Motor neuron (in vitro differentiated cells): ENCODE measurements at regions of chr9 and their contacts with region 1.

Region 1: DNA sequence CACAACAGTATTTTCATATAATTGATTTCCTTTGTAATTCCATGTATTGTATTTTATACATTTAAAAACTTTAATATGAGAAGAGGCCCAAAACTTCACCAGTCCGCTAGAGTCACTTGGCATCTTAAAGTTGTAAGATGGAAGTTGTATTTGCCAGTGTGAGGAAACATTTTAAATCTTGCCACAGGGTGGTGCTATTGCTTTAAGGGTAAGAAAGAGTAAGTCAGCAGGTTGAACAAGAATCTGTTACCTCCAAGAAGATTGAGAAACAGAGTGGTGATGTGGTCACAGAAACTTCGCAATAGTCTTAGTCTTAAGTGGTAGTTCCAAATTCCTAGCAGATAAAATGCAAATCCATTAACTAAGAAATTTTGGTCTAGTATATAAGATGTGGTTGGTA is 39.8 kb upstream of the RANBP6 start:
- ATAC-seq: peak in 3 of 8 experiments; percentile 54 to 78 (median 68)
- H3K4me3 ChIP-seq: no peak overlapping the region
- H3K27ac ChIP-seq: no peak overlapping the region
- H3K4me1 ChIP-seq: no peaks in the 10 kb centered on the region

Region 2: GRCh38 chr9:5886114-5886939 is 168.9 kb before region 1 on chr9:
- in situ Hi-C with region 1: loop called in 3 of 9 experiments (anchors 25 kb)
- ATAC-seq: peak; percentile 99 to 100 (median 100)
- H3K4me3 ChIP-seq: no peak overlapping the region
- H3K27ac ChIP-seq: no peak overlapping the region
- H3K4me1 ChIP-seq: no peaks in the 10 kb centered on the region

Region 3: DNA sequence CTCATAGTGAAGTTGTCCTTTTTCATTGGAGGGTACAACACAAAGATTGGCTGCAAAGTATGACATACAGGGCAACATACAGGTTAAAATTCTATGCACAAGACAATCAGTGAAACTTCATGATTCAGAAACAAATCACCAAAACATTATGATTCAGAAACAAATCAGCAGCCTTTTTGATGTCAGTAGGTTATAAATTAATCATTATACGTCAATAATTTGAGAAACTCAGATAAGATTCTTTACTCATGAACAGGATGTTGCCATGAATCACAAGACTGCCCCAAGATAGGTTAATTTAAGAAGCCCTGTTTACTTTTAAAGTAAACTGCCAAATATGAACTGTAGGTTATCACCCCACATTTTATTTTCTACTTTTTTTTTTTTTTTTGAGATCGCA is 98.2 kb after region 1 on chr9:
- in situ Hi-C with region 1: loop called in 1 of 9 experiments (anchors 25 kb)
- ATAC-seq: no peak
- H3K4me3 ChIP-seq: no peak overlapping the region
- H3K27ac ChIP-seq: no peak overlapping the region
- H3K4me1 ChIP-seq: no peaks in the 10 kb centered on the region

Region 4: DNA sequence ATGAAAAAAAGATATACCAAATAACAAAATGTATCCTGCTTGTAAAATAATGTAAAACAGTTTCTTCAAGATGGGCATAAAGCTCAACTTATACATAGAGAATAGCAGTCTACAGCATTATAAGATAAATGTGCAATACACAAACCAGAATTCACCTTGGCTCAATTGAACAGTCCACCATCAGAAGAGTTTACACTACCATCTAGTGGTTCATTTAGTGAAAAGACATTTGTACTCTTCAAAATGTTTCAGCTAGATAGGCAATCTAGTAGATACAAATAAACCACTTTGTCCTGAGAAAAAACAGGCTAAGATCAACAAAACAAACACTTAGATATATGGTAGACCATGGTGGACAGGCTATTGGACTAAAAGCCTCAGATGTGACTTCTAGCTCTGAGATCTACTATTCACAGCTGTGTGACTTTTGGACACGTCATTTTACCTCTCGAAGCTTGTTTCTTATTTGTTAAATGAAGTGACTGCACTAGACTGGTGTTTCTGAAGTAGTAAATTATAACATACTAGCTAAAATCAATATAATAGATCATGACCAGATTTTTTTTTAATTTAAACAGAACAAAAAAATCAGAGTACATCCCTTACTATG is 250.8 kb after region 1 on chr9:
- in situ Hi-C with region 1: loop called in 2 of 9 experiments (anchors 25 kb)
- ATAC-seq: peak in 5 of 8 experiments; percentile 35 to 70 (median 40)
- H3K4me3 ChIP-seq: no peak overlapping the region
- H3K27ac ChIP-seq: no peak overlapping the region
- H3K4me1 ChIP-seq: no peaks in the 10 kb centered on the region